ENCODE measurements at regions of chr20 and their contacts with region 1.

Region 1: GRCh38 chr20:47019121-47019824 is 124.6 kb downstream of the EYA2 start:
- DNase-seq: no peak
- ATAC-seq: peak in 3 of 4 donors; percentile 37 to 71 (median 54)
- H3K4me3 ChIP-seq: no peak overlapping the region
- H3K27ac ChIP-seq: no peak overlapping the region
- H3K4me1 ChIP-seq: peaks cover 0 to 7% (median 0%) of the 10 kb centered on the region in 12 donors
- H3K27me3 ChIP-seq: no peaks in the 10 kb centered on the region
- CTCF ChIP-seq: no peak
- POLR2A ChIP-seq: no peak

Region 2: GRCh38 chr20:48107549-48107948 is 1088.3 kb after region 1 on chr20:
- intact Hi-C with region 1: loop called in 1 of 10 experiments (anchors 5 kb)
- DNase-seq: no peak
- ATAC-seq: no peak
- H3K4me3 ChIP-seq: no peak overlapping the region
- H3K27ac ChIP-seq: no peak overlapping the region
- H3K4me1 ChIP-seq: no peaks in the 10 kb centered on the region
- H3K27me3 ChIP-seq: peaks cover 0 to 4% (median 0%) of the 10 kb centered on the region in 9 donors
- CTCF ChIP-seq: no peak
- POLR2A ChIP-seq: no peak